ENCODE measurements at regions of chr3 and their contacts with region 1.

Region 1: DNA sequence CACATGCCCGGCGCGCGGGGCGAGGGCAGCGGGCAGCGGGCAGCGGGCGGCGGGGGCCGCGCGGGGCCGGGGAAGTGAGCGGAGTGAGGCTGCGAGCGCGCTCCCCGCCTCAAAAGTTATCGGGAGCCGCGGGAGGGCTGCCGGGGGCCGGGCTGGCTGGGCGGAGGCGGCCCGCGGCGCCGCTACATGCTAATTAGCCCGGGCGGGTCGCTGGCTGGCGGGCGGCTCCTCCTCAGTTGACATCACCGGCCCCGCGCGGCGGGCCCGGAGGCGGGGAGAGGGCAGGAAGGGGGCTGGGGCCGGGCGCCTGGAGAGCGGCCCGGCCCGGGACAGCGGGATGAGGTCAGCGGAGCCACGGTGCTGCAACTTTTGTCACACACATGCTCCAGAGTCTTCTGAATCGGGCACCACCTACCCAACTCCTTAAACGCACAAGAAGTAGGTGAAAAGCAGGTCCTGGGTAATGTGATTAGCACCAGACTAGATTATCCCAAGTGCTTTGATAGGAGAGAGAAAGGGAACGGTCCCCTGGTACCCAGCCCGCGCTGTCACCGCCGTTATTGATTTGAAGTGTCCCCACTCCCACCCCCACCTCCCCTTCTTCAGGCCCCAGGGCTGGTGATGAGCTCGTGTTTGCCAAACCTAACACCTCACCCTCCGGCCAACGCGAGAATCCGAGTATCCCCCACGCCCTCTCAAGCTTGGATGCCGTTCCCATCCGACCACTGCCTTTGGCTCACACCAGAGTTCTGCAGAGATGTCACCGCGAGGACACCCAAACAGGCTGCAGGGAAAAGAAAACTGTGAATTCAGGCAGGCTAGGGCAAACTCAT is at the start of gene HEG1:
- DNase-seq: peak; percentile 85
- ATAC-seq: peak; percentile 58
- H3K4me3 Mint-ChIP-seq: peak within 1 kb of the TSS; percentile 94
- H3K27ac Mint-ChIP-seq: peak within 1 kb of the TSS; percentile 90
- H3K4me1 Mint-ChIP-seq: peaks cover 40% of the 10 kb centered on the region
- H3K27me3 Mint-ChIP-seq: peaks cover 11% of the 10 kb centered on the region
- total RNA-seq, gene HEG1: 5.9 to 6.4 TPM

Region 2: DNA sequence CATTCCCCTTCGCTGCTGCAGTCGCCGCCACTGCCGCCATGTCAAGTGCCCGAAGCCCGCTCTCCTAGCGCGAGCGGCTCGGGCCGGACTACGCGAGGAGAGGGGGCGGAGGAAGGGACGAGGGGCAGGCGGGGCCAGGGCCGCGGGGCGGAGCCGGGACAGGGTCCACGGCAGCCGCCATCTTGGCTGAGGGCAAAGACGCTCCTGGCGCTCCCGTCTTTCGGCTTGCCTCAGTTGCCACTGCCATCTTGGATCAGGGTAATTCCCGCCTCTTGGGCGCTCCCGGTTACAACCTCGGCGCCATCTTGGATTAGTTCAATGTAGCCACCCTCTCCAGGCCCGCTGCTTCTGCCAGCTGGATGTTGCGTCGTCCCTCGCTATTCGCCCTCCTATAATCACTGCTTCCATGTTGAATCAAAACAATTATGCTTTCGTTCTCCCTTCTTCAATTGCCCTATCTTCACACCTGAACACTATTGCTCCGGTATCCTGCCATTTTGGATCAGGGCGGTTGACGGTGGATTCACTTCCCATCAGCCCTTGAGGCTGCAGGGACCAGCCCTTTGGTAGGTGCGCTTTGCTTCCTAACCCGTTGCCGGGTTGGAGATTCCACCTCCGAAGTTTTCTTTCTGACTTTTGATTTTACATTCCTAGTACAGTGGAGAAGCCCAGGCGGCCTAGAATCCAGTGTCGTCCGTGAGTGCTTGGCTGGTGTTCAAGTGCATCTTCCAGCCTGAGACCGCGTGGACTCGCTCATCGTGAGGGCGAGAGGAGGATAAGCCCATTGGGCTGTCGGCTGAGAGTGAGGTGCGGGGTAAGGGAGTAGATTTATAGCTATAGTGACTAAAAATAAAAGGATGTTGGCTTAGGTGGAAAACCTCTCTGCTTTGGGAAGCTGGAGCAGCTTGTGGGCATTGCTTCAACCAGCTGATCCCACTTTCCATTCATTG is 1470.9 kb before region 1 on chr3 and contains the start of gene HACD2:
- CTCF ChIA-PET with region 1: no interaction called
- POLR2A ChIA-PET with region 1: no interaction called
- intact Hi-C with region 1: loop called in 1 of 2 experiments (anchors 10 kb)
- DNase-seq: peak; percentile 97
- ATAC-seq: peak; percentile 93
- H3K4me3 Mint-ChIP-seq: no peak within 1 kb of the TSS
- H3K27ac Mint-ChIP-seq: peak within 1 kb of the TSS; percentile 87
- H3K4me1 Mint-ChIP-seq: peaks cover 21% of the 10 kb centered on the region
- H3K27me3 Mint-ChIP-seq: no peaks in the 10 kb centered on the region
- total RNA-seq, gene HACD2: 22.1 to 27.7 TPM

Region 3: GRCh38 chr3:125035217-125035616 is 20.9 kb before region 1 on chr3:
- CTCF ChIA-PET with region 1: interaction called, 3 read pairs
- POLR2A ChIA-PET with region 1: no interaction called
- intact Hi-C with region 1: loop called (anchors 1 to 2 kb)
- DNase-seq: no peak
- ATAC-seq: peak; percentile 92
- H3K4me3 Mint-ChIP-seq: no peak overlapping the region
- H3K27ac Mint-ChIP-seq: peak overlapping the region; percentile 10
- H3K4me1 Mint-ChIP-seq: peaks cover 22% of the 10 kb centered on the region
- H3K27me3 Mint-ChIP-seq: no peaks in the 10 kb centered on the region

Region 4: GRCh38 chr3:125119752-125120378 is 63.7 kb after region 1 on chr3:
- CTCF ChIA-PET with region 1: interaction called, 3 read pairs
- POLR2A ChIA-PET with region 1: no interaction called
- intact Hi-C with region 1: loop called in 1 of 2 experiments (anchors 5 kb)
- DNase-seq: peak; percentile 33
- ATAC-seq: peak; percentile 62
- H3K4me3 Mint-ChIP-seq: no peak overlapping the region
- H3K27ac Mint-ChIP-seq: no peak overlapping the region
- H3K4me1 Mint-ChIP-seq: peaks cover 31% of the 10 kb centered on the region
- H3K27me3 Mint-ChIP-seq: peaks cover 2% of the 10 kb centered on the region

Region 5: DNA sequence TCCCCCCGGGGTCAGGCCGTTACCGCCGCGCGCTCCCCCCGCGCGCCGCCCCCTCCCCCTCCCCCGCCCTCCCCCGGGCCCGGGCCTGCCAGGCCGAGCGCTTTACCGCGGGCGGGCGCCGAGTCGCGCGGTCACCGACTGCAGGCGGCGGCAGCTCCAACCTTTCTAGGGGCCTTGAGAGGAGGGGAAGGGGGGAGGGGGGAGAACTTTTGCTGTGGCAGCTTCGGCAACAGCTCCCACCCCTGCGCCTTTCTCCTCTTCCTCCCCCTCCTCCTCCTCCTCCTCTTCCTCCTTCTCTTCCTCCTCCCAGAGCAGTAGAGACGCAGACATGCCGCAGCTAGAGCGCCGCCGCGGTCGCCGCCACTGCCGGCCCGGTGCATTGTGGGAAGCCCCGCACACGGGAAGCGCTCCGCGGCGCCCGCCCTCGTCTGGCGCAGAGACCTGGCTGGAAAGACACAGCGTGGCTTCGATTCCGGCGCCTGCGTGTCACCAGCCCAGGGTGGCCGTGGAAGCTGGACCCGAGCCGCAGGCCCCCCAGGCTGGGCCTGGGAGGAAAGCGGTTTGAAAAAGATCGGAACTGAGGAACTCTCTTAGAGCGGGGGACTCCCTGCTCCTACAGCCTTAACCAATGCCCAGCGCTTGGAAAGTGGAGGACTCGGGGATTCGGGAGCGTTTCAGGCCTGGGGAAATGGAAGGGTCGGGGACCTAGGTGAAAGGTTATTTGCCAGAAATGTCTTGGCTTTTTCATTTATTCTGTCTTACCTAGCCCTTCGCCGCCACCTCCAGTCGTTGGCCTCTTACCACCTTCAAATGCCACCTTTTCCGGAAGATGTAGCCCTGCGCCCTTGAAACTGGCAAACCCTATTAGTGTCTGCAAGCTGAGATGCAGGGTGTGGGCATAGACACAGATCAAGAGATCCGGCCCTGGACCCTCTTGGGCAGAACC is 319.1 kb after region 1 on chr3 and contains the start of gene ZNF148:
- CTCF ChIA-PET with region 1: no interaction called
- POLR2A ChIA-PET with region 1: no interaction called
- intact Hi-C with region 1: loop called (anchors 2 to 5 kb)
- DNase-seq: peak; percentile 94
- ATAC-seq: peak; percentile 89
- H3K4me3 Mint-ChIP-seq: peak within 1 kb of the TSS; percentile 92
- H3K27ac Mint-ChIP-seq: peak within 1 kb of the TSS; percentile 99
- H3K4me1 Mint-ChIP-seq: peaks cover 36% of the 10 kb centered on the region
- H3K27me3 Mint-ChIP-seq: no peaks in the 10 kb centered on the region
- total RNA-seq, gene ZNF148: 30.3 to 37.7 TPM

Region 6: GRCh38 chr3:125519678-125520589 is 463.8 kb after region 1 on chr3 and contains the start of gene SNX4:
- CTCF ChIA-PET with region 1: no interaction called
- POLR2A ChIA-PET with region 1: no interaction called
- intact Hi-C with region 1: loop called in 1 of 2 experiments (anchors 5 kb)
- DNase-seq: peak; percentile 93
- ATAC-seq: peak; percentile 99
- H3K4me3 Mint-ChIP-seq: peak within 1 kb of the TSS; percentile 85
- H3K27ac Mint-ChIP-seq: peak within 1 kb of the TSS; percentile 93
- H3K4me1 Mint-ChIP-seq: peaks cover 37% of the 10 kb centered on the region
- H3K27me3 Mint-ChIP-seq: no peaks in the 10 kb centered on the region
- total RNA-seq, gene SNX4: 36.2 to 36.3 TPM

Region 7: GRCh38 chr3:126083913-126084767 is 1028.0 kb after region 1 on chr3 and contains the start of gene SLC41A3:
- CTCF ChIA-PET with region 1: no interaction called
- POLR2A ChIA-PET with region 1: no interaction called
- intact Hi-C with region 1: loop called in 1 of 2 experiments (anchors 5 kb)
- DNase-seq: peak; percentile 93
- ATAC-seq: peak; percentile 92
- H3K4me3 Mint-ChIP-seq: peak within 1 kb of the TSS; percentile 92
- H3K27ac Mint-ChIP-seq: peak within 1 kb of the TSS; percentile 96
- H3K4me1 Mint-ChIP-seq: peaks cover 24% of the 10 kb centered on the region
- H3K27me3 Mint-ChIP-seq: no peaks in the 10 kb centered on the region
- total RNA-seq, gene SLC41A3: 23.1 to 26.6 TPM

Measured in activated CD4-positive, alpha-beta T cell treated with anti-CD3 and anti-CD28 coated beads for 36 hours (primary cell).